HEK293 (cell line): ENCODE measurements at regions of chr17 and their contacts with region 1.

Region 1: DNA sequence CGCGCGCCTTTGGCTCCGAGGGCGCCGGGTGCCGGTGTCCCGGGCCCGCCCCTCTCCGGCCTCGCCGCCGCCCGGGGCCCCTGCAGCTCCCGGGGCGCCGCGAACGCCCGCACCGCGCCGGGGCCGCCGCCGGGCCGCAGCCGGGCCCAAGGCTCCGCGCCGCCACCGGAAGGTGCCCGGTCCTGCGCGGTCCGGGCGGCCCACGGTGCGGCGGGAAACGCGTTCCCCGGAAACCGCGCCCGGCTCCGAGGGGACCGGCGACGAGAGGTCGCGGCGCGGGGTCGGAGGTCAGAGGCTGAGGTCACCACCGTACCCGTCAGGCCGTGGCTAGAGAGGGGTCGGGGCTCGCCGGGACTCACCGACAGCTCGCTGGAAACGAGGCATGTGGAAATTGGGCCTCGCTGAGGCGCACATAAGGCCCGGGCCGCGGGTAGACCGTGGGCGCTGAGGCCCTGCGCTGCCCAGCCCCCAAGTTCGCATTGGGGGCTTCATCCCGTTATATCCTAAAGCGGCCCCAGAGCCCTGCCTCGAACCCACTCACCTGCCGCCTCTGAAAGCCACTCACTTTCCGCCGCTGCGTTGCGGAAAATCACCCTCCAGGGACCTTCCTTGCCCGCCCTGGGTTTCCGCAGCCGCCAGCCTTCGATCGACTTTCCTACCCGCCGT is at the start of gene DUS1L:
- H3K4me3 ChIP-seq: peak within 1 kb of the TSS; percentile 83
- H3K27ac ChIP-seq: peak within 1 kb of the TSS; percentile 95
- H3K4me1 ChIP-seq: peaks cover 7% of the 10 kb centered on the region; the same call in 1 of the 2 replicates
- CTCF ChIP-seq: peak; percentile 27; the same call in 1 of the 2 replicates

Region 2: GRCh38 chr17:82051776-82052637 is 13.8 kb before region 1 on chr17 and contains the starts of genes GPS1 and RFNG:
- CTCF ChIA-PET with region 1: interaction called, 5 read pairs
- POLR2A ChIA-PET with region 1: interaction called, 19 read pairs
- H3K4me3 ChIP-seq: peak within 1 kb of the TSS; percentile 83
- H3K27ac ChIP-seq: peak within 1 kb of the TSS; percentile 73
- H3K4me1 ChIP-seq: peaks cover 7% of the 10 kb centered on the region
- CTCF ChIP-seq: no peak

Region 3: GRCh38 chr17:82077617-82078358 is 12.0 kb after region 1 on chr17:
- CTCF ChIA-PET with region 1: interaction called, 5 read pairs
- POLR2A ChIA-PET with region 1: interaction called, 15 read pairs
- H3K4me3 ChIP-seq: no peak overlapping the region
- H3K27ac ChIP-seq: peak overlapping the region; percentile 11; the same call in 1 of the 2 replicates
- H3K4me1 ChIP-seq: no peaks in the 10 kb centered on the region
- CTCF ChIP-seq: no peak